RWPE1 (cell line): ENCODE measurements at regions of chr5 and their contacts with region 1.

Region 1: DNA sequence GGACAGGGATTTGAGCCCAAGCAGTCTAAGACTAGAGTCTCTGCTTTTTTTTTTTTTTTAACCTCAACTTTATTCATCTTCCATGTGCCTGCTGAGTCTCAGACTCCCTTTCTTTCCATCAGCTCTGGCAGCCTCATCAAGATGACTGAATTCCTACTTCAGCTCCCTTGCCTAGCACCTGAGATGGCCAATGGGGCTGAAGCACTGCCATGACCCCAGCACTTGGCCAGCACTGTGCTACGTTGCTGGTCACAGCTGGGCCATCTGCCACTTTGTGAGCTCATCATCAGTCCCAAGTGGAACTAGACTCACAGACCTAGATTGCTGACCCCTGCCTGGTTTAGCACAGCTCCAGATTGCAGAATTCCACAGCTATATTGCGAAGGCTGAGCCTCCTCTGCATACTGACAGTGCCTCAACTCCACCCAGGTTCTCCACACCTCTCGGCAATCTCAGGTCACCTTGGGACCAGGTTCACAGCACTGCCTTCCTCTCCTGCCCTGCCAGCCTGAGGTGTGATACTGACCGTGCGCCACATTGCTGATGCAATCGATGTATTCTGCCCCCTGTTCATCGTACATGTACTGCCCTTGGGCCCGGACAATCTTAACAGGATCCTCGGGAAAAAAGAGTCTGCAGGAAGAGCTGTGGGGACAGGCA is 1.6 kb downstream of the PHYKPL start:
- DNase-seq: no peak
- H3K27ac ChIP-seq: peak overlapping the region; percentile 93
- CTCF ChIP-seq: no peak

Region 2: DNA sequence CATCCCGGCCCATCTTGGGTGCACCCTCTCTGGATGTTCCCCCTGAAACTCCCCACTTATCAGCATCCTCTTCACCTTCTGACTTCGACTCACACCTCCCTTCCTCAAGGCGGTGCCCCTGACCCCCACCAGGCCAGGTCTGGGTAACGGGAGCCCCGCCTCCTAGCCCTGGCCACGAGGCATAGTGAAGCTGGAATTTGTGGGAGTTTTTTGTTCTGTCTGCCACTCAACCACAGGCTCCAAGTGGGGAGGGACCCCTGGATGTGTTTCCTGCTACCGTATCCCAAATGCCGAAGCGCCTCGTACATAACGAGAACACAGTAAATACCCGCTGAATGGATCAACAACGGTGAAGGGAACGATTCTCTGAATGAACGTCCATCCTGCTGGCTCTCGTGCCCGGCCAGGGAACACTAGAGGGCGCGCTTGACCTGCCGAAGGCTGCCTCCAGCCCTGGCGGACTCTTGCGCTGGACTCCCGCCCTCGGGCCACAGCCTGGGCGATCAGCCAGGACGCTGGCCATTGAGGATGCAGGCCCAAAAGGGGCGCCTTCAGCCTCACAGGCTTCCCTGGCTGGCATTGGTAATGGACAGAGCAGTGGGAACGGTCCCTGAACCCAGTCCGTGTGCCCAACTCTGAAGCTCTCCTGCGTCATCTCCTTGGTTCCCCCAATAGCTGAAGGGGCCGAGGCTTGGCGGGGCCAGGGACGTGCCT is 48.9 kb after region 1 on chr5:
- CTCF ChIA-PET with region 1: interaction called, 11 read pairs
- POLR2A ChIA-PET with region 1: no interaction called
- DNase-seq: peak; percentile 91
- H3K27ac ChIP-seq: no peak overlapping the region
- CTCF ChIP-seq: peak; percentile 97

Region 3: GRCh38 chr5:178542455-178542854 is 311.4 kb after region 1 on chr5:
- CTCF ChIA-PET with region 1: interaction called, 3 read pairs
- POLR2A ChIA-PET with region 1: interaction called, 12 read pairs
- DNase-seq: no peak
- H3K27ac ChIP-seq: no peak overlapping the region
- CTCF ChIP-seq: no peak